PC-3 (cell line): ENCODE measurements at regions of chr12 and their contacts with region 1.

Region 1: GRCh38 chr12:132218915-132219314 is 74.7 kb downstream of the NOC4L start:
- DNase-seq: peak; percentile 64
- ATAC-seq: peak; percentile 73
- H3K4me3 ChIP-seq: no peak overlapping the region
- H3K27ac ChIP-seq: no peak overlapping the region
- H3K4me1 ChIP-seq: 0 out of 2 replicates have a peak, but pooled peaks cover 3% of the 10 kb centered on the region
- H3K27me3 ChIP-seq: peaks cover 61% of the 10 kb centered on the region
- CTCF ChIP-seq: peak; percentile 76

Region 2: GRCh38 chr12:131912518-131913294 is 306.2 kb before region 1 on chr12:
- CTCF ChIA-PET with region 1: no interaction called
- POLR2A ChIA-PET with region 1: no interaction called
- intact Hi-C with region 1: no loop called
- DNase-seq: peak; percentile 86
- ATAC-seq: peak; percentile 74
- H3K4me3 ChIP-seq: no peak overlapping the region
- H3K27ac ChIP-seq: no peak overlapping the region
- H3K4me1 ChIP-seq: peaks cover 25% of the 10 kb centered on the region
- H3K27me3 ChIP-seq: no peaks in the 10 kb centered on the region
- CTCF ChIP-seq: peak; percentile 31; the same call in 1 of the 2 replicates

Region 3: DNA sequence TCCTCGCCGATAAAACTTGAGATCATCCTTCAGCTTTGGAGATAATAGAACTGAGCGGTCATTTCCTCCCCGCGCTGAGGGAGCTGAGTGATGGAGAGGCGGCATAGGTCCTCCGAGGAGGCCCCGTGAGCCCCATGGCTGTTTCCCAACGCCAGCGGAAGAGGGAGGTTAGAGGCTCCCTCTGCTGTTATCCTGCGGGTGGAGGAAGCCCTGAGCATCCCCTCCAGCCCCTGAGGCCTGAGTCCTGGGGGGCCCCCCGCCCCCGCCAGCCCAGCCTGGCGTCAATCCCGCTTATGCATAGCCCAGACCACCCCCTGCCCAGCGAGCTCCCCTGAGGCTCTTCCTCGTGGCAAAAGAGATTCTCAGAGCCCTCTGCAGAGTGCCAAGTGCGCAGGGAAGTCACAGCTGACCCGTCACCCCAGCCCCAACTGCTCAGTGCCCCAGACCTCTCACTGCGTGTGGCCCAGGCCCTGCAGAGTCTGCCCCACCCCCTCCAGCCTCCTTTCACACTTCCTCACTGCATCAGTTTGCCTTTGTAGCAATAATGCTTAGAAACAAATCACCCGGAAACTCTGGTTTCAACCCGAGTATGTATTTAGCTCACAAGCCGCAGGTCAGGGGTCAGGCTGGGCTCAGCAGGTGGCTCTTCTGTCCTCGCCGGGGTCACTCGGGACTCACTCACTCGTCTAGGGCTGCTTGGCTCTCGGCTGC is 155.1 kb after region 1 on chr12:
- CTCF ChIA-PET with region 1: no interaction called
- POLR2A ChIA-PET with region 1: interaction called, 13 read pairs
- intact Hi-C with region 1: no loop called
- DNase-seq: no peak
- ATAC-seq: no peak
- H3K4me3 ChIP-seq: no peak overlapping the region
- H3K27ac ChIP-seq: no peak overlapping the region
- H3K4me1 ChIP-seq: no peaks in the 10 kb centered on the region
- H3K27me3 ChIP-seq: peaks cover 85% of the 10 kb centered on the region
- CTCF ChIP-seq: no peak; the same call in 1 of the 2 replicates